Panc1 (cell line): ENCODE measurements at regions of chr16 and their contacts with region 1.

Region 1: GRCh38 chr16:5379954-5380353 is 282.4 kb upstream of the EEF2KMT start:
- DNase-seq: no peak
- ATAC-seq: no peak
- H3K4me3 ChIP-seq: no peak overlapping the region
- H3K27ac ChIP-seq: no peak overlapping the region
- H3K4me1 ChIP-seq: no peaks in the 10 kb centered on the region
- H3K27me3 ChIP-seq: peaks cover 29% of the 10 kb centered on the region
- CTCF ChIP-seq: no peak

Region 2: DNA sequence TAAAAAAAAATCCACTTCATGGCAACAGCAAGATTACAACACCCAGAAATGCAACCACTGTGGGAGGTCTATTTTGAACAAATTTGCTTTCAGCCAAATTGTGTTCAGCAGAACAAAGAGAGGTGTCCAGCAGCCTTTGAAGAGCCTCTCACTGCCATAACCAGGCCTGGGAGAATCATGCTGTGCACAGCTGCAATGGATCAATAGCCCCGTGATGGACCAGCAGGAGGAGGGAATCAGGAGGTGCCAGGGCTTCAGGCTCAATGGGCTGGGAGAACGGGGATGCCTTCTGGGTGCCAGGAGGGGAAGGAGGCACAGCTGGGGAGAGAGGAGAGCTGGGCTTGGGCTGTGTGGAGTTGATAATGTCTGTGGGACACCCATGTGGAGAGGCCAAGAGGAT is 83.9 kb after region 1 on chr16:
- CTCF ChIA-PET with region 1: interaction called, 10 read pairs
- POLR2A ChIA-PET with region 1: no interaction called
- in situ Hi-C with region 1: no loop called
- intact Hi-C with region 1: no loop called
- DNase-seq: no peak
- ATAC-seq: no peak
- H3K4me3 ChIP-seq: no peak overlapping the region
- H3K27ac ChIP-seq: no peak overlapping the region
- H3K4me1 ChIP-seq: no peaks in the 10 kb centered on the region
- H3K27me3 ChIP-seq: peaks cover 11% of the 10 kb centered on the region; the same call in 1 of the 2 replicates
- CTCF ChIP-seq: no peak